Activated CD8-positive, alpha-beta memory T cell treated with anti-CD3 and anti-CD28 coated beads, Interleukin-2, amount 10 ng/mL, durations not matched to agents 7 days and 5 days (primary cell): ENCODE measurements at regions of chr13 and their contacts with region 1.

Region 1: DNA sequence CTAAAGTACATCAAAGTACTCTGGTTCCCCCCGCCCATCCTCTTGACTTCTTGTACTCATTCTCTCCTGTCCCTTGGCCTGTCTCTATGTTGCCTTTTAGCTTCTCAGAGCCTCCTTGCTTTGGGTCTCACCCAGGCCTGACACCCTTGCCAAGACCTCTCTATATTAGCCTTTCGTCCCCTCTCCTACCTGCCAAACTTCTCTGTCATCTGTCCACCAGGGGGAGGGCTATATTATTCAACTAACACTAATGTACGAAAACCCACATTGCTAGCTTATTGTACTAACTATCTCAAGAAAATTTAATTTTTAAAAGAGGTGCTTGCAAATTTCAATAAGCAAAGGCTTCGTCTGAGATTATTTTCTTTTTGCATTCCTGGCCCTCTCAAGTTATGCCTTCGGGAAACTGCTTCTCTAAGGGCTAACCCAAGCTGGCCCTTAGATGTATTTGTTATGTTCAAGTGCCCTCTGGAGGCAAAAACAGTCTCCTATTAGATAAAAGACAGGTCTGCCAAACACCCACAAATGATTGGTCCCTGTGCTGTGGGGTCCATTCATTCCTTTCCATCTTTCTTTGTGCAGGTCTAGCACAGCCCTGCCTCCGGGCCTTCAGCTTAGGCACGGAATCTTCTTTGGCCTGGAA is 6.3 kb upstream of the MRPS31 start:
- DNase-seq: peak; percentile 69
- ATAC-seq: peak; percentile 83
- H3K4me3 Mint-ChIP-seq: peak overlapping the region; percentile 65
- H3K27ac Mint-ChIP-seq: peak overlapping the region; percentile 100
- H3K4me1 Mint-ChIP-seq: peaks cover 32% of the 10 kb centered on the region
- H3K27me3 Mint-ChIP-seq: no peaks in the 10 kb centered on the region

Region 2: GRCh38 chr13:40666905-40667621 is 110.2 kb before region 1 on chr13:
- CTCF ChIA-PET with region 1: interaction called, 16 read pairs
- DNase-seq: peak; percentile 59
- ATAC-seq: peak; percentile 22
- H3K4me3 Mint-ChIP-seq: peak overlapping the region; percentile 84
- H3K27ac Mint-ChIP-seq: peak overlapping the region; percentile 84
- H3K4me1 Mint-ChIP-seq: peaks cover 24% of the 10 kb centered on the region
- H3K27me3 Mint-ChIP-seq: no peaks in the 10 kb centered on the region

Region 3: DNA sequence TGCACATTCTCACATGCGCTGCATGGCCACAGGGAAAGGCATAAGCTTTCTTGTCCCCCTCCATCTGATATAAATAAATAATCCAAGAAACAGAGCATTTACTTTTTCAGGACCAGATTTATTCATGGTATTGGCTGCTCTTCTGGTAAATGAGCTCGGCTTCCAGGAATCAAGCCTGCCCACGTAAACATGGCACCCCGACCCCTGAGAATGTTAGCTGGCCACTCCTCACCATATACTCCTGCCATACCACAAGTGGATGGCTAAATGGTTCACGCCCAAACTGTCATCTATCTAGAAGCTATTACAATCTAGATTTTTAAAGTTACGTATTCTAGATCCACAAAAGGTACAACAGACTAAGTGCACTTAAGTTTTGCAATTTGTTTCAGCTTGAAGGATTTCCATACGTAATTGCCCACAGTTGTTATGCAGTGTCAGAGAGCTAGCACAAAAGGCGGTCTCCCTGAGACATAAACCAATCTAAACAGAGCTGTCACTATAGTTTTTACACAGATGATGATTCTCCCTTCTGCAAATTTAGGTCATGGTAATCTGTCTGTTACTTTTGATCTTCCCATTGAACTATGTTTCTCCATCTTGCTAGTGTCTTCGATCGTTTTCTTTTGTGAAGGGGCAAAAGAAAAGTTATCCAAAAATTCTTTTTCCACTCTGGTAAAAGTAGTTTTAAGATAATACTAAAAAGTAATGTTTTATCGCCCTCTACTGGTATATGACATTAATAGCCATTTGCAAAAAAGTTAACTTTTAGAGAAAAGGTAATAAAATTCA is 94.6 kb before region 1 on chr13:
- CTCF ChIA-PET with region 1: interaction called, 17 read pairs
- DNase-seq: no peak
- ATAC-seq: no peak
- H3K4me3 Mint-ChIP-seq: no peak overlapping the region
- H3K27ac Mint-ChIP-seq: no peak overlapping the region
- H3K4me1 Mint-ChIP-seq: peaks cover 4% of the 10 kb centered on the region
- H3K27me3 Mint-ChIP-seq: no peaks in the 10 kb centered on the region

Region 4: GRCh38 chr13:40762849-40763248 is 14.4 kb before region 1 on chr13:
- CTCF ChIA-PET with region 1: interaction called, 12 read pairs
- DNase-seq: no peak
- ATAC-seq: no peak
- H3K4me3 Mint-ChIP-seq: no peak overlapping the region
- H3K27ac Mint-ChIP-seq: no peak overlapping the region
- H3K4me1 Mint-ChIP-seq: peaks cover 26% of the 10 kb centered on the region
- H3K27me3 Mint-ChIP-seq: no peaks in the 10 kb centered on the region

Region 5: DNA sequence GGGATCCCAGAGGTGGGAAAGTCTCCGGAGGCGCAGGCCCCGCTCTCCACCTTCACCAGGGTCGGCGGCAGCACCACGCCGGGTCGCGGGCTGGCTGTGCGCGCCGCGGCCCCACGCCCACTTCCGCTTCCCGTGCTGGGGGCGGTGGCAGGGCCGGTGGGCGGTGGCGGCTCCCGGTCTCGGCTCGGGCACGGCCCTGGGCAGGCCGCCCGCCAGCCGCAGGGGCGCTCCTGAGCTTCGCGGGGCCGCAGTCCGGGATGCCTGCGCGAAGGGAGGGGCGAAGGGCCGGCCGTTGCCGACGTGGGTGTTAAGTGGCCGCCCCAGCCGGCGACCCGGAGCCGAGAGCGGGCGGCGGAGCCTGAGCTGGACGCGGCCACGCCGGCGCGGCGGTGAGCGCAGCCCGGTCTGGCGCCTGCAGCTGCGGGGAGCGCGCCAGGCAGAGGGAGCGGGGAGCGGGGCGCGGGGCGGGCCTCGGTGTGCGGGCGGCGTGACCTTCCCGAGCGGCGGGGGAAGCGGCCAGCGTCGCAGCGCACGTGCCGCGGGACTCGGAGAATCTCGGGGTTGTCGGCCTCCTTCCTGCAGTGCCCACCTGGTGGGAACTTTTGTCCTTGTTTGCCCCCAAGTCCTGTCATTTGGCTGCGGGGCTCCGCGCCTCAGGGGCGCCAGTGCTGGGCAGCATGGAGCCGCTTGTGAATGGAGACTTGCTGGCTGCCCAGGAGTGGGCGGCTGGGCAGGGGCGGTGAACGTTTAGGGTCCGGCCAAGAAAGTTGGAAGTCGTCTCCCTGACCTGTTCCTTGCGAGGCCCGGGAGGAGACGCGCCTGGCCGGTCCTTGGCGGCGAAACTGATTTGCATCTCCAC is 12.2 kb after region 1 on chr13 and contains the start of gene SLC25A15:
- CTCF ChIA-PET with region 1: interaction called, 44 read pairs
- DNase-seq: peak; percentile 74
- ATAC-seq: peak; percentile 90
- H3K4me3 Mint-ChIP-seq: peak within 1 kb of the TSS; percentile 73
- H3K27ac Mint-ChIP-seq: peak within 1 kb of the TSS; percentile 67
- H3K4me1 Mint-ChIP-seq: peaks cover 50% of the 10 kb centered on the region
- H3K27me3 Mint-ChIP-seq: no peaks in the 10 kb centered on the region
- total RNA-seq, gene SLC25A15: 11.2 to 14.5 TPM

Region 6: DNA sequence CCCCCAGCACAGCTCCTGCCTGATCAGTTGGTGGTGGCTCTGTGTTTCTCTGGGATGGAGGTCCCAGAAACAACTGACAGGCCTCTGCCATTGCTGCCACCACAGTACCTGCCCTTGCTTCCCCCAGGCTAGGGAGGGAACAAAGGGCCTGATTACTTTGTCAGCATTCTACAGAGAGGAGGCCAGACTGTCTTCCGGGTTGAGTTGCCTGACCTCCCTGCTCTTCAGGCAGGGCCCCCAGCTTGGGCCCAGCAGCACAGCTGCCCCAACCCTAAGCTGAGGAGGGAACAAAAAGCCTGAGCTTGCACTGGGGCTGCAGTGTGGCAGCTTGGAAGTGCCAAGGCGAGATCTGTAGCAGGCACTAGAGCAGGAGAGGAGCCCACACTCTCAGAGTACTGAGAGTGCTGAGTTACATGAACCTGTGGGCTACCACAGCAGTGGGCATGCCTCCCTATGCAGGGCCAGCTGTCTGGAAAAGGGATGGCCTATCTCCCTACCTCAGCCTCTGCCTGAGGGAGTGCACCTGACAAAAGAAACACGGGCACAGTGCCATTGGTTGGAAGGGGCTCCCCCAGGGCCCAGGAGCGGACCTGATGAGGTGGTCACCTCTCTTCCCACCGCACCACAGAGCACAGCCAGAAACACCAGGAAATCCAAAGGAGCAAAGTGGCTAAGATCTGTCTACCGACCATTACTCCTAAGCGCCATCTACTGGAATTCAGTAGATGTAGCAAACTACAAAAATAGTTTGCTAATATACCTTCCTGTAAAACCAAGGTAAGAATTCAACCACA is 36.6 kb after region 1 on chr13:
- CTCF ChIA-PET with region 1: interaction called, 16 read pairs
- DNase-seq: no peak
- ATAC-seq: peak; percentile 69
- H3K4me3 Mint-ChIP-seq: no peak overlapping the region
- H3K27ac Mint-ChIP-seq: no peak overlapping the region
- H3K4me1 Mint-ChIP-seq: peaks cover 1% of the 10 kb centered on the region
- H3K27me3 Mint-ChIP-seq: no peaks in the 10 kb centered on the region